Left cardiac atrium (tissue), 4 donors: ENCODE measurements at regions of chr1 and their contacts with region 1.

Region 1: GRCh38 chr1:113660088-113660487 is 99.2 kb downstream of the PHTF1 start:
- DNase-seq: no peak
- ATAC-seq: no peak

Region 2: DNA sequence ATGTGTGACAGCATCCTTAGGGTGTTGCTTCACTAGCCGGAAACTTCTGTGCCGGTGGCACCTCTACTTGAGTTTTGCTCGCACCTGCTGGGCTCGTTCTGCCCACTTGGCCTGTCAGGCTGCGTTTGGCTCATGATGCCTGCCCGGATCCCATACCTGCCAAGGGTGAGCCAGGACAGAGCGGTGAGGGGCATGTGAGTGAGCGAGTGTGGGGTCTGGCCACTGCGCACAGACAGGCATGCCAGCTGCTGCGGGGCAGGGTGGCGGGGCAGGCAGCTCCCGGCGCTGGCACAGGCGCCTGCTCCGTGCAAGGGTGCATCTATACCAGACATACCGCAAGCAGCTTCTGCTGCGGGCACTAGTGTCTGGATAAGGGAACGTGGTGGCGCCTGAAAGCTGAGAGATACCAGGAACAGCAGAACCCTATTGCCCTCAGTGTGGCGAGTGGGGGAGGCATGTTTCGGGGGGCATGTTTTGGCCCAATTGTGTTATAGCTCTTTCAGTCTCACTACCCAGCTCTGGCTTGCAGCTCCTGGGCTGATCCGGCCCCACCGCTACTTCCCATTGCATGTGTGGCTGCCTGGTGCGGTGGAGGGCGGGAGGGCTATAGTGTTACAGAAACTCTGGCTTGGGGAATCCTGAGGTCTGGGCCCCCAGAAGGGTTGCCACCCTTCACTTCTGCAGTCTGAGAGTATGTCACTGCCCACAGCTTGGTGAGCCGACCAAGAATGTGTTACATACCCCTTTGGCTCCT is 237.6 kb before region 1 on chr1:
- intact Hi-C with region 1: no loop called
- DNase-seq: no peak
- ATAC-seq: no peak

Region 3: DNA sequence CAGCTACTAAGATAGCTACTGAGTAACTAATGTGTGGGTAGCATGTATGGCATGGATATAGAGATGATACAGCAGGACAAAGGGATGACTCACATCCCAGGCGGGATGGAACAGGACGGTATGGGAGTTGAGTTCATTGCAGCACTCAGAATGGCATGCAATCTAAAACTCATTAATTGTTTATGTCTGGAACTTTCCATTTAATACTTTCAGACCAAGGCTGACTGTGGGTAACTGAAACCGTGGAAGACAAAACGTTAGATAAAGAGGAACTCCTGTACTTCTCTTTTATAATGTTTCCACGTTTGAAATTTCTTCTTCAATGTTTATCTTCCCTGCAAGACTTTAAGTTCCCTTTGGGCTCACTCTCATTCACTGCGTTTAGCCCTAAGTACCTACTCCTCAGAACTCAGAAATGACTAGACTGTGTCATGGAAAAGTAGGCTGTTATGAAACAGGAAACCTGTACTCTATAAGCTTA is 117.8 kb before region 1 on chr1:
- intact Hi-C with region 1: no loop called
- DNase-seq: no peak
- ATAC-seq: no peak

Region 4: DNA sequence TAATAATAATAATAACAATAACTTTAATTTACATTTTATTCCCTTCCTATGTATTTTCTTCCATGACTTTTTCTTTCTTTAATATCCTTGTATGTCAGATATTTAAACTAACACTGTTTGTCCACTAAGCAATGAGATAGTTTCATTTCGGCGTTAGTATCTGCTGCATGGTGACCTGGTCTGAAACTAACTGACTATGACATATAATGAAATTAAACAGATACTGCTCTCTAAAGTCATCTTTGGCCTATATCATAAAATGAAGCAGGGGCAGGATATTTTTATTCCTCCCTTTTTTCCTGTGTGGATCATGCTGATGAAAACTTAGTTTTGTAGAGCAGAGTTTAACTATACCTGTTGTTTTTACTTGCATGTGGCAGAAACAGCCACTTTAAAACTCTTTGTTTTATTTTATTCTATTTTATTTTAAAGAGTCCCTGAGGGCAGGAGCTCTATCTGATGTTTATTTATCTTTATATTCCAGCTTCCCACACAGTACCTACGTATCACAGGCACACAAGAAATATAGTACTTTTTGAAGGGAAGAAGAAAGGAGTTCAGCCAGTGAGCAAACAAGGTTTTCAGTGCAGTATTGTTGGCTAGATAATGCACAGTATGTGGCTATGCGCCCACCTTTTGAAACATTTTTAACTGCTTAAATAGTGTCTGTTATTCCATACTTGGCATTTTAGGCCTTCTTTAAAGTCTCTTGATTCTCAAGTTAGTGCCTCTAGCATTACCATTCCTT is 66.4 kb before region 1 on chr1:
- intact Hi-C with region 1: no loop called
- DNase-seq: no peak
- ATAC-seq: no peak

Region 5: DNA sequence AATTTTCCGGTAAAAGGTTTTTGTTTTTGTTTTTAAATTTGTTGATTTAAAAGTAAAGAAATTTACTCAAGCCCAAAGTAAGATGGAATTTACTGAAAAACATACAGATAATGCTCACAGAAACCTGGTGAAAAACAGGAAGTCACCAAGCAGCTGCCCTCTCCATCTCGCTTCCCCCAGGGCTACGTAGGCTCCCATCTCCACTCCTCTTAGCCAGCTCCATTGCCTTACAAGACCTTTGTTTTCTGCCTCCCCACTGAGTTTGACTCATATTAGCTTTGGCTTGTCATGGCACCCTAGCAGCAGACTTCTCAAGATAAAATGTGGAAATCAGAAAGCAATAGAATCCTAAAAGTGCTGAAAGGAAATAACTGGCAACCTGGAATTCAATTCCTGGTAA is 41.3 kb after region 1 on chr1:
- intact Hi-C with region 1: loop called in 1 of 2 experiments (anchors 5 kb)
- DNase-seq: no peak
- ATAC-seq: no peak

Region 6: DNA sequence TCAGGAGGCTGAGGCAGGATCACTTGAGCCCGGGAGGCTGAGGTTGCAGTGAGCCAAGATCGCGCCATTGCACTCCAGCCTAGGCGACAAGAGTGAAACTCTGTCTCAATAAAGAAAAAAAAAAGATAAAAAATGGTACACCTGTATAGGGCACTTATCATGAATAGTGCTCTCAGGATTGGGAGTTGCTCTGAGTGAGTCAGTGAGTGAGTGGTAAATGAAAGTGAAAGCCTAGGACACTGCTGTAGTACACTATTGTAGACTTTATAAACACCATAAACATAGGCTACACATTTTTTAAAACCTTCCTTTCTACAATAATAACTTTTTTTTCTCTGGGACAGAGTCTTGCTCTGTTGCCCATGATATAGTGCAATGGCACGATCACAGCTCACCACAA is 82.4 kb after region 1 on chr1:
- intact Hi-C with region 1: no loop called
- DNase-seq: no peak
- ATAC-seq: no peak